ENCODE measurements at regions of chr21 and their contacts with region 1.

Region 1: GRCh38 chr21:38733973-38734546 is 71.7 kb upstream of the ETS2 start:
- DNase-seq: peak; percentile 87 to 93
- ATAC-seq: peak; percentile 87 to 96 (median 93)
- H3K4me3 ChIP-seq: peak overlapping the region; percentile 49
- H3K27ac ChIP-seq: peak overlapping the region; percentile 34
- H3K4me1 ChIP-seq: peaks cover 5% of the 10 kb centered on the region
- H3K27me3 ChIP-seq: peaks cover 0 to 5% (median 0%) of the 10 kb centered on the region in 3 donors
- CTCF ChIP-seq: peak; percentile 90

Region 2: GRCh38 chr21:38793926-38794713 is 60.1 kb after region 1 on chr21:
- intact Hi-C with region 1: loop called in 1 of 2 experiments (anchors 5 kb)
- DNase-seq: no peak
- ATAC-seq: no peak
- H3K4me3 ChIP-seq: no peak overlapping the region
- H3K27ac ChIP-seq: no peak overlapping the region
- H3K4me1 ChIP-seq: no peaks in the 10 kb centered on the region
- H3K27me3 ChIP-seq: no peaks in the 10 kb centered on the region
- CTCF ChIP-seq: no peak

Region 3: DNA sequence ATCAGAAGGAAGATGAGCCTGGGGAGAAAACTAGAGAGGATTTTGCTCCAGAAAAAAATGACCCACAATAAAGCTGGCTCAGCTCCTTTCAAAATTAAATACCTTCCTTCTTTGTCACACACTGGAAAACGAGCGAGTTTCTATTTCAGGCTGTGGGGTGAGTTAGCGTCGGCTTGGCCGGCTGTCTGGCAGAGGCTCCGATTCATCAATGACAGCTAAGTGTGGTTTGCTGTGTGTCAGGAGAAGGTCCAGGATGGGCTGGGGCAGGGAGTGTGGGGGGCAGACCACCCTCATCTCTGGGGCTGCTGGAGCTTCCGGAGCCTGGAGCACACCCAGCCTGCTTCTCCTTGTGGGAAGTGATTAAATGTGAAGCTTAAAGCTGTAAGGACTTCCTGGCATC is 191.9 kb after region 1 on chr21:
- intact Hi-C with region 1: loop called in 1 of 2 experiments (anchors 10 kb)
- DNase-seq: peak; percentile 73 to 83
- ATAC-seq: peak; percentile 94 to 98 (median 97)
- H3K4me3 ChIP-seq: peak overlapping the region; percentile 51
- H3K27ac ChIP-seq: peak overlapping the region; percentile 77
- H3K4me1 ChIP-seq: peaks cover 19% of the 10 kb centered on the region
- H3K27me3 ChIP-seq: no peaks in the 10 kb centered on the region
- CTCF ChIP-seq: no peak

Region 4: DNA sequence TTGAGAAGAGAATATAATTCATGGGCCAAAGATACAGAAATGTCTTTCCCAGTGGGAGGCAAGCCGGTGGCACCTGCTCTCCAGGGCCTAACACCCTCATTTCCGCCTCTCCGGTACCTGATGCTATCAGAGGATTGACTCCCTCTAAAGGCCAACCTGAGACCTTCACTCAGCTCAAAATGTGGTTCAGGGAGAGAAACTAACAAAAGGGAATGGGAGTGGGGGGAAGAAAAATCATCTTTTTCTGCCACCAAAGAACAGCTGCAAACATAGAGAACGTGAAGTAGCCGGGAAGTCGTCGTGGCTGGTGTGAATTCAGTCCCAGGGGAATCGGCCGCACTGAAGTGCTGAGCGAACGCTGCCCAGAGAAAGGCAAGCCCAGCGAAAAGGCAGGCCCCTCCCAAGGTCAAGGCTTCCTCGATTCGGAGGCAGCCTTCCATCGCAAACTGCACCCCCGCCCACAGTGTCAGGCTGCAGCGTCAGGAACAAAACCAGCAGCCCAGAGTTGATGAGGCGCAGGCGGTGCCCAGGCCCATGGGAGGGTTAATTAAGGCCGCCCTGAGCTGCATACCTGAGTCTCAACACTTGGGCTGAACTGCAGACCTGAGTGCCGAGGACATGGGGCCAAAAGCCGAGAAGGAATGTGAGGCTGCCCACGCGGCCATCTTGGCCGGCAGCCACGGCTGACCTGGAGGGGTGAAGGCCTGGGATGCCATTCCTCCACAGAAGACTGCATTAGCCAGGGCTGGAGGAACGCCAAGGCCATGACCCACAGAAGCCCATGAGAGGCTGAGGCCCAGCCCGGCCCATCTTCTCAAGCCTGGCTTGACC is 289.0 kb after region 1 on chr21:
- intact Hi-C with region 1: loop called in 1 of 2 experiments (anchors 10 kb)
- DNase-seq: peak; percentile 56 to 73
- ATAC-seq: peak; percentile 81 to 86 (median 82)
- H3K4me3 ChIP-seq: peak overlapping the region; percentile 33
- H3K27ac ChIP-seq: peak overlapping the region; percentile 66
- H3K4me1 ChIP-seq: peaks cover 15% of the 10 kb centered on the region
- H3K27me3 ChIP-seq: no peaks in the 10 kb centered on the region
- CTCF ChIP-seq: peak; percentile 38

Region 5: DNA sequence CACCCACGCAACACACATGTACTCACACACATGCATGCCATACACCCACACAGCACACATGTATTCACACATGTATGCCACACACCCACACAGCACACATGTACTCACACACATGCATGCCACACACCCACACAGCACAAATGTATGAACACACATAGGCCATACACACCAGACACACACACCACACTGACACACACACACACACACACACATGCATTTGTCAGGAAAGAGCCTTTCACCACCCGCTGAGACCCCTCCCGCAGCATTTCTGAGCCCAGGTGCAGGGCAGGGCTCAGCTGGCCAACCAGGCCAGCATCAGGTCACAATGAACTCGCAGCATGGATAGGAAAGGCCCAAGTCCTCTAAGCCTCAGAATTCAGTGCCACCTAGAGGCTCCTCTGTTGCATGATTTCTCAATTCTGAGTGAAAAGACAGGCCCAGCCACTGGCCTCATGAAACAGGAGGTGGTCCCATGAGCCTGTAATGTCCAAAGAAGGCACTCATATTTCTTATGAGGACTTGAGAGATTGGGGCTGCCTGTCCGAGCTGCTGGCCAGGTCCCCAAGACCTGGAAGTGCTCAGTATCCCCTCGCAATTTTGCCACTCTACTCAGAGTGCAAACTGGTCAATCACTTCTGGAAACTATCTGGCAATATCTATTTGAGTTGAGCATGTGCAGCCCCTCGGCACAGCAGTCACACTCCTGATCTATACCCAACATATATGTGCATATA is 391.9 kb after region 1 on chr21:
- intact Hi-C with region 1: loop called in 1 of 2 experiments (anchors 1 kb)
- DNase-seq: peak in 1 of 2 donors; percentile 63
- ATAC-seq: peak; percentile 83 to 95 (median 94)
- H3K4me3 ChIP-seq: no peak overlapping the region
- H3K27ac ChIP-seq: peak overlapping the region; percentile 38
- H3K4me1 ChIP-seq: peaks cover 13% of the 10 kb centered on the region
- H3K27me3 ChIP-seq: no peaks in the 10 kb centered on the region
- CTCF ChIP-seq: peak; percentile 60

Region 6: DNA sequence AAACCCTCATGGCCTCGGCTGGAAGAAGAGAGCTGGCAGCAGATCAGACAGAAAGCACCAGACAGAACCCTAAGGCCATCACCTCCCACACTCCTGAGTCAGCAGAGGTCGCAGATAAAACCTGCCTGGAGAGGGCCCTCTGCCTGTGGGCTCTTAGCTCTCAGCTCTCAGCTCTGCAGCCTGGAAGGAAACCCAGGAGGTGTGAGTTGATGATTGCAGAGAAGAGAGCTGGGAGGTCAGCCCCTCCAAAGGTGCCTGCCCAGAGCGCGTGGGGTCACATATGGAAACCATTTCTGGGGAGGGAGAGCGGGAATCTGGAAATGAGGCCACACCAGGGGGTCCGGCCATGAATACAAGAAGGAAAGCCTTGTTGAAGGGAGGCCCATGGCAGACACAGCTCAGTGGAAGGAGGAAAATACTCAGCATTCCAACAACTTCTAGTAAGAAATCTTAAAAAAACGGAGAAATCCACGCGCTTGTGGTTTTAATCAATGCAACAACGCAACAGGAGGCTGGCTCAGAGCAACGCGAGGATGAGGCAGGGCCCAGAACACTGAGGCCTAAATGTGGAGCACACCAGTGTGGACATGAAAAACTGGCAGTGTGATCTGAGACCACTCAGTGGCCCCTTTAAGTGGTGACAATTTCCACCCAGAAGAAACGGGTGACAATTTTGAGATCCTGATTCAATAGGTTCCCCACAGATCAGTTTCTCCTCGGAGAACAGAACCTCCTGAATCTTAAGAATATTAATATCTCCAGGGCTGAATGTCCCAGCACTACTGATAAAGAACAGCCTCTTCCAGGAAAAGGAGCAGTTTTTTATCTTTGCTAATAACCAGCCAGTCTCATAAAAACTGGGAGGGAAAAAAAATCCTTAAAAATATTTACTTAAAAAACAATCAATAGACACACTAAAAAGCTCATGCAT is 403.5 kb after region 1 on chr21:
- intact Hi-C with region 1: loop called (anchors 2 to 5 kb)
- DNase-seq: no peak
- ATAC-seq: no peak
- H3K4me3 ChIP-seq: no peak overlapping the region
- H3K27ac ChIP-seq: no peak overlapping the region
- H3K4me1 ChIP-seq: no peaks in the 10 kb centered on the region
- H3K27me3 ChIP-seq: no peaks in the 10 kb centered on the region
- CTCF ChIP-seq: no peak

Measured in psoas muscle (tissue), 8 donors.